ENCODE measurements at regions of chr1 and their contacts with region 1.

Region 1: DNA sequence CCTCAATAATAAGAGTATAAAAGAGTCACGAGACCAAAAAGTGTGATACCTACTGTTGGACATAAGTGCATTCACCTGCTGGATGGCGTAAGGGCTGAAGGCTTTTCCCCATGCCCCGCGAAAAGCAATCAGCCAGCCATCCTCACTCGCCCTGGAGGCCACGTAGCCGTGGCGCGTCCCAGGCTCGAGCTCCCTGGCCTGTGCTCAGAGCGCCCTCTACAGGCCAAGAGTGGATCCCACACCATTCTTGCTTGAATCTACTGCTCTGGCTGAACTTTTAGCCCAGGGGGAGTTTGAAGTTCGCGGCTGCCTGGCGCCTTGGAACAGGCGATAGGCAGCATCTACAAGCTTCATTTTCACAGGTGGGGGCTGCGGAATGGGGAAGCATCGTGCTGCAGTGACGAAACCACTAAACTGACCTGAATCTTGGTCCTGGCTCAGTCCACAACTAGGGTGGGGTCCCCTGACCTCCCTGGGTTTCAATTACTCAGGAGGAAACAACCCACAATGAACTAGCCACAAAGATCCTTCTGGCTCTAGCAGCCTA is 70.3 kb upstream of the SERBP1 start:
- DNase-seq: peak; percentile 59 to 97 (median 84)

Region 2: GRCh38 chr1:66938613-66939012 is 561.9 kb before region 1 on chr1:
- intact Hi-C with region 1: no loop called
- DNase-seq: no peak

Region 3: DNA sequence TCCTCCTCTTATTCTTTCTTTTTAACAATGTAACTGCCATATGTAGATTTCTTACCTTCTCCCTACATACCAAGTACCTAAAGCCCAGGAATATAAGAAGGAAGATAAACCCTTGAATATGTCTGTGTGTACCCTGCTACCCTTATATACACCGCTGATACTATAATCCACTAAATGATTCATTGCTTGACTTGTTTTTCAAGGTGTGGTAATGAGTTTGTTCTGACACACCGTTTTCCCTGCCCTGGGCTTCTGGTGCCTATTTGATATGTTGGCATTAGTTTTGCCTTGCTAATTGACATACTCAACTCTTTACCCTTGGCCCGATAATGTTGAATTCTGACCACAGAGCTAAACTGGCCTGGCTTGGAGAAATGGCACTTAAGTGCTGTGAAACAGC is 269.9 kb before region 1 on chr1:
- intact Hi-C with region 1: loop called (anchors 2 kb)
- DNase-seq: no peak

Region 4: DNA sequence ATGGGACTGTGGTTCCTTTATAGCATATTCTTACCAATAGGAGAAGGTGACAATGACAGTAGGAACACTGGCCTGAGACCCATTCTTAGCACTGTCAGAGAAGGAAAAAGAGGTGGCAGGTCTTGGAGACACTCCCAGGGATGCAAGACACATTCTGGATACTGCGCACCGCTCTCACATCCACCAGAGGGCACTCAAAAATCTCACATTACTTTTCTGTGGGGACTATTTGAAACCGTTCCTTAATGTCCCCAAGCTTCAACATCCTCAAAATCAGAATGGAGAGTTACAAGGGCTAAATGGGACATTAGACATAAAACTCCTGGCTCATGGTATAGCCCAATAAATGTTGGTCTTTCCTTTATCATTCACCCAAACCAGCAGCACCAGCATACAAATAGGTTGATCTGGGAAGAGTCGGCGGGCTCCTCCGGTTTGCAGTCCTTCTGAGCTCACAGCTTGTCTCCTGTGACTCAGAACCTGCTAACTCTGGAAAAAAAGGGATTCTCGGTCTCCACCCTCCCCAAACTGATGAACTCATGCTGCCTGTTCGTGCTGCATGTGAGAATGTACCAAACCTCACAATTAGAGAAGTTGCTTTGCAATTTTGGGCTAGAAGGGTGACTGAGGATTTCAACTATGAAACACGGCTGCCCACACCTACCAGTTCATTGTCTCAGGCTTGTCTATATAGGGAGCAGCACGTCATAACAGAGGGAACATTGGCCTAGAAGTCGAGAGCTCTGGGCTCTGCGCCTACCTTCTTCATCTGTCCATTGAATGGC is 152.6 kb before region 1 on chr1:
- intact Hi-C with region 1: loop called (anchors 1 kb)
- DNase-seq: peak in 6 of 10 donors; percentile 23 to 85 (median 40)

Region 5: DNA sequence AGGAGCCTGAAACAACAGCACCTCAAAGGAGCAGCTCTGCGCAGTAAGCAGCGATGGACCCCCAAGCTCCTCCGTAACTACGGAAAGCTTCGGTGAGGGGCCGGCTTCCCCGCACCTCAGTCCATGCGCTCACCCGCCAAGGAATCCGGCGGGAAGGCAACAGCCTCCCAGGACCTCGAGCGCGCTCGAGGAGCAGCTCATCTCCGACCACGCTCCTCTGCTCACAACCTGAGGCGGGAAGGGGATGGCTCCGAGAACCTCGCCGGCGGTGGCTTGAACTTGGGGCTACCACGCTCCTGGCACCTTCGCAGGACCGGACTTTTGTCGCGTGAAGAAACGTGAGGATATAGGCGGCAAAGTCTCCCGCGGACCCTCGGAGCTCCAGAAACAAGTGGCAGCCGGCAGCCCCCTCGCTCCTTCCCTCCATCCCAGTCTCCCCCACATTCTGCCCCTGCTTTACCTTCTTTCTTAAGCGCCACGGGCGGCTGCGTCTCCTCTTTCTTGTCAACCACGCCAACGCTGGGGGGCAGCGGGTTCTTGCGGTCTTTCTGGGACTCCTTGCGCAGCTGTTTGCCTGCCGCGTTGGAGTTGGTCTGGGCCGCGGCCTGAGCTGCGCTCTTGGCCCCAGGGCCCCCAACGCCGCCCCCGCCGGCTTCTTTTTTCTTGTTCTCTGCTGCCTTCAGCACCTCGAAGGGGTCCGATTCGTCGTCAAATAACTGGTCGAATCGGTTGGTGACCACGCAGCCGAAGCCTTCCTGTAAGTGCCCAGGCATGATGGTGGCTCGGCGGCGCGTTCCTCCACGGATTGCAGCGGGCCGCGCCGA is 70.7 kb before region 1 on chr1:
- intact Hi-C with region 1: loop called (anchors 10 kb)
- DNase-seq: peak in 8 of 10 donors; percentile 15 to 85 (median 24)

Measured in posterior cingulate gyrus (tissue), 11 donors.